Activated CD4-positive, alpha-beta memory T cell treated with anti-CD3 and anti-CD28 coated beads, Interleukin-2, amount 10 ng/mL, durations not matched to agents 7 days and 5 days (primary cell): ENCODE measurements at regions of chr7 and their contacts with region 1.

Region 1: GRCh38 chr7:14691597-14692203 is 210.9 kb downstream of the DGKB start:
- DNase-seq: peak; percentile 32
- H3K4me3 Mint-ChIP-seq: no peak overlapping the region
- H3K27ac Mint-ChIP-seq: no peak overlapping the region
- H3K4me1 Mint-ChIP-seq: no peaks in the 10 kb centered on the region
- H3K27me3 Mint-ChIP-seq: peaks cover 5% of the 10 kb centered on the region

Region 2: DNA sequence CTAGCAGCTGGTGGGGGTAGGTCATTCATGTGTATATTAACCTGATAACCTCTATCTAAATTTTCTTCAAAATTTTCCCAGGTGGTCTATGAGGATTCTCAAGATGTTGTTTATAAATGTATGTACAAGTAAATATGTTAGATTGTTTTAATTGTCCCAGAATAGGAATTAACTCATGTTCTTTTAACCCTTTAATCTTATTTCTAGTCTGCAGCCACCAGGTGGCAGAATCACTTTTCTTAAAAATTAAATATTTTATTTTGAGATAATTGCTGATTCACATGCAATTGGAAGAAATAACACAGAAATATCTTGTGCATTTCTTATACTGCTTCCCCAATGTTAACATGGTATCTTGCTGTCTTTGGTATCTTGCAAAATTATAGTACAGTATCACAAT is 1414.7 kb before region 1 on chr7:
- CTCF ChIA-PET with region 1: interaction called, 10 read pairs
- POLR2A ChIA-PET with region 1: no interaction called
- DNase-seq: no peak
- H3K4me3 Mint-ChIP-seq: no peak overlapping the region
- H3K27ac Mint-ChIP-seq: no peak overlapping the region
- H3K4me1 Mint-ChIP-seq: no peaks in the 10 kb centered on the region
- H3K27me3 Mint-ChIP-seq: peaks cover 1% of the 10 kb centered on the region

Region 3: DNA sequence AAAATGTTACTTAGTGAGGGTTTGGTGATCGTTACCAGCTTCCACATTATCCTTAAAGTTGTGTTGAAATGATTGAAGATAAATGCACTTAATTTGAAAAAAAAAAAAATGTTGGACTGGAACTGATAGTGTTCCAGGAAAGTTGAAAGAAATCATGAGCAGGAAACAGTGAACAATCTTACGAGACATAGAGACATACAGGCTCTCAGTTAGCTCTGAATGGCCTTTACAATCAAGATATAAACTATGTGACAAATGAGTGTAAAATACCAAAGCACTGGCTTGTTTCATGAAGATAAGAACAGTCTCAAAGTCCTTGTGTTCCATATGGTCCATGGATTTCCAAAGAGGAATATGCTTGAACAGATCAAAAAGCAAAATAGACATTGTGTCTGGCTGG is 272.2 kb before region 1 on chr7:
- CTCF ChIA-PET with region 1: no interaction called
- POLR2A ChIA-PET with region 1: no interaction called
- DNase-seq: no peak
- H3K4me3 Mint-ChIP-seq: no peak overlapping the region
- H3K27ac Mint-ChIP-seq: no peak overlapping the region
- H3K4me1 Mint-ChIP-seq: no peaks in the 10 kb centered on the region
- H3K27me3 Mint-ChIP-seq: no peaks in the 10 kb centered on the region